Mammary epithelial cell (primary cell): ENCODE measurements at regions of chr1 and their contacts with region 1.

Region 1: GRCh38 chr1:159646687-159647086 is 59.1 kb downstream of the APCS start:
- DNase-seq: no peak
- H3K4me3 ChIP-seq: no peak overlapping the region
- H3K27ac ChIP-seq: no peak overlapping the region
- H3K4me1 ChIP-seq: no peaks in the 10 kb centered on the region
- H3K27me3 ChIP-seq: no peaks in the 10 kb centered on the region
- CTCF ChIP-seq: no peak

Region 2: GRCh38 chr1:159746666-159747065 is 100.0 kb after region 1 on chr1:
- CTCF ChIA-PET with region 1: no interaction called
- dilution Hi-C with region 1: no loop called
- in situ Hi-C with region 1: loop called in 1 of 2 experiments (anchors 25 kb)
- intact Hi-C with region 1: no loop called
- DNase-seq: no peak
- H3K4me3 ChIP-seq: no peak overlapping the region
- H3K27ac ChIP-seq: no peak overlapping the region
- H3K4me1 ChIP-seq: no peaks in the 10 kb centered on the region
- H3K27me3 ChIP-seq: peaks cover 2% of the 10 kb centered on the region
- CTCF ChIP-seq: no peak